MCF 10A (cell line): ENCODE measurements at regions of chr2 and their contacts with region 1.

Region 1: GRCh38 chr2:81894451-81894990 is 1590.0 kb upstream of the LRRTM1 start:
- DNase-seq: peak; percentile 52
- H3K4me3 Mint-ChIP-seq: no peak overlapping the region
- H3K27ac Mint-ChIP-seq: no peak overlapping the region
- H3K4me1 Mint-ChIP-seq: peaks cover 7% of the 10 kb centered on the region
- H3K27me3 Mint-ChIP-seq: no peaks in the 10 kb centered on the region
- CTCF ChIP-seq: peak; percentile 35

Region 2: DNA sequence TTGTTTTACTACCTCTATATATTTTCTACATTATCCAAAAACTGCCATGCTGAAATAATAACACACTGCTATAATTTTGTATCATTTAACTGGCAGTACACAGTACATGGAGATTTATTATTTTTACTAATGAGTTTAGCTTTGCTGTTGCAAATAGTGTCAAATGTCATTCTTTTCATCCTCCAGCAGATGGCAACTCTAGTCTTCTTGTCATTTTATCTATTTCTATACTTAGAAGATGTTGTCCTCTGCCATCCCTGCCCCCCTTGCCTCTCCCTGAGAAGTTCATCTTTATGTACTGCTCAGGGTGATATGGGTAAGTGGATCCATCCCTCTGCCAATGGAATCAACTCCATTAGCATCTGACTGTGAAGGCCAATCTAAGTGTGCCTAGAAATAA is 1568.3 kb before region 1 on chr2:
- CTCF ChIA-PET with region 1: interaction called, 3 read pairs
- POLR2A ChIA-PET with region 1: no interaction called
- intact Hi-C with region 1: loop called (anchors 1 kb)
- DNase-seq: peak; percentile 53
- H3K4me3 Mint-ChIP-seq: no peak overlapping the region
- H3K27ac Mint-ChIP-seq: no peak overlapping the region
- H3K4me1 Mint-ChIP-seq: peaks cover 2% of the 10 kb centered on the region
- H3K27me3 Mint-ChIP-seq: no peaks in the 10 kb centered on the region
- CTCF ChIP-seq: peak; percentile 51

Region 3: DNA sequence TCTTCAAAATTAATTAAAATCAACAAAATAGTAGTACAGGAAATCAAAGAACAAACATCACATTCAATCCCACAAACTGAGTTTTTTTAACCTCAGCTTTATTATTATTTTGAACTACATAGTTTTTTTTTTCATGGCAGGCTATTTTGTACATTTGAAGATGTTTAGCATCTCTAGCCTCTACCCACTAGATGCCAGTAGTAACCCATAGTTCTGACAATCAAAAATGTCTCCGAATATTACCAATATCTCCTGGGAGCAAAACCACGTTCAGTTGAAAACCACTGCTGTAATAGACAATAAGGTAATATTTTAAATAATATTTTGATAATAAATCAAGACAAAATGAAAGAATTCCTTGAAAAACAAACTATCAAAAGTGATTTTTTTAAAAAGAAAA is 887.4 kb before region 1 on chr2:
- CTCF ChIA-PET with region 1: no interaction called
- POLR2A ChIA-PET with region 1: no interaction called
- intact Hi-C with region 1: loop called (anchors 10 kb)
- DNase-seq: peak; percentile 16
- H3K4me3 Mint-ChIP-seq: no peak overlapping the region
- H3K27ac Mint-ChIP-seq: no peak overlapping the region
- H3K4me1 Mint-ChIP-seq: no peaks in the 10 kb centered on the region
- H3K27me3 Mint-ChIP-seq: no peaks in the 10 kb centered on the region
- CTCF ChIP-seq: no peak

Region 4: DNA sequence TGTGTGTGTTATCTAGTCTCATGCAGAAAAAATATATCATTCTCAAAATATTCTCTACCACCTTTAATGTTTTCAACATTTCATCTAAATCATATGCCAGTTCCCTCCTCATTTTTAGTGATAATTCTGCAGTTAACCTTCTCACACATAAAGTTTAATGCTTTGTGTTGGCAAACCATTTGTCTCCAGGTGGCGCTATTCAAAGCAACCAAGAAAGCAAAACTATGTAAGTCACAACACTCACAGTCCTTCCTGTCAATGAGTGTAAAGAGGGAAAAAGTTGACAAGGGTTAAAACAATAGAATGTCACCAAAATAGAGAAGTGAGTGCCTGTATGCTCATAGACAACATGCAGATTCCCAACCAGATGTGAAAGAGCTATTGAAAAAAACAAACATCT is 628.4 kb before region 1 on chr2:
- CTCF ChIA-PET with region 1: no interaction called
- POLR2A ChIA-PET with region 1: no interaction called
- intact Hi-C with region 1: loop called (anchors 1 kb)
- DNase-seq: peak; percentile 55
- H3K4me3 Mint-ChIP-seq: no peak overlapping the region
- H3K27ac Mint-ChIP-seq: no peak overlapping the region
- H3K4me1 Mint-ChIP-seq: no peaks in the 10 kb centered on the region
- H3K27me3 Mint-ChIP-seq: no peaks in the 10 kb centered on the region
- CTCF ChIP-seq: peak; percentile 33

Region 5: GRCh38 chr2:81324046-81324445 is 570.5 kb before region 1 on chr2:
- CTCF ChIA-PET with region 1: interaction called, 12 read pairs
- POLR2A ChIA-PET with region 1: no interaction called
- intact Hi-C with region 1: loop called (anchors 1 kb)
- DNase-seq: peak; percentile 39
- H3K4me3 Mint-ChIP-seq: no peak overlapping the region
- H3K27ac Mint-ChIP-seq: no peak overlapping the region
- H3K4me1 Mint-ChIP-seq: no peaks in the 10 kb centered on the region
- H3K27me3 Mint-ChIP-seq: no peaks in the 10 kb centered on the region
- CTCF ChIP-seq: peak; percentile 51

Region 6: DNA sequence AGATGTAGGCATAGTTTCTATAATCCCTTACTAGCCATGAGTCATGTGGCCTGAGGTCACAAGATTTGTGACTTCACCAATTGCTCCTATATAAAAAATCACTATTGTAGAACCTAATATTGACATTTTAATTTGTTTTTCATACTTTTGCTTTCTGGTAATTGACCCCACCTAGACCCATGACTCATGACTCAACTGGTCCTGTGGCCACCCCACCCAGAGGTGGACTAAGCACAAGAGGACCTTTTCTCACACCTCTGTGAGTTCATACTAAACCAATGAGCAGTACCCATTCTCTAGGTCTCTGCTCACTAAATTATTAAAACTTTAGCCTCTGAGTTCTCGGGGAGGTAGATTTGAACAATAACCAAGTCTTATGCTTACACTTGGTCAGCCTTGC is 22.5 kb before region 1 on chr2:
- CTCF ChIA-PET with region 1: no interaction called
- POLR2A ChIA-PET with region 1: no interaction called
- intact Hi-C with region 1: no loop called
- DNase-seq: peak; percentile 7
- H3K4me3 Mint-ChIP-seq: no peak overlapping the region
- H3K27ac Mint-ChIP-seq: no peak overlapping the region
- H3K4me1 Mint-ChIP-seq: peaks cover 5% of the 10 kb centered on the region
- H3K27me3 Mint-ChIP-seq: no peaks in the 10 kb centered on the region
- CTCF ChIP-seq: no peak

Region 7: GRCh38 chr2:82013641-82014040 is 119.1 kb after region 1 on chr2:
- CTCF ChIA-PET with region 1: no interaction called
- POLR2A ChIA-PET with region 1: no interaction called
- intact Hi-C with region 1: no loop called
- DNase-seq: no peak
- H3K4me3 Mint-ChIP-seq: no peak overlapping the region
- H3K27ac Mint-ChIP-seq: no peak overlapping the region
- H3K4me1 Mint-ChIP-seq: no peaks in the 10 kb centered on the region
- H3K27me3 Mint-ChIP-seq: no peaks in the 10 kb centered on the region
- CTCF ChIP-seq: no peak